Esophagus squamous epithelium (tissue), 5 donors: ENCODE measurements at regions of chr3 and their contacts with region 1.

Region 1: DNA sequence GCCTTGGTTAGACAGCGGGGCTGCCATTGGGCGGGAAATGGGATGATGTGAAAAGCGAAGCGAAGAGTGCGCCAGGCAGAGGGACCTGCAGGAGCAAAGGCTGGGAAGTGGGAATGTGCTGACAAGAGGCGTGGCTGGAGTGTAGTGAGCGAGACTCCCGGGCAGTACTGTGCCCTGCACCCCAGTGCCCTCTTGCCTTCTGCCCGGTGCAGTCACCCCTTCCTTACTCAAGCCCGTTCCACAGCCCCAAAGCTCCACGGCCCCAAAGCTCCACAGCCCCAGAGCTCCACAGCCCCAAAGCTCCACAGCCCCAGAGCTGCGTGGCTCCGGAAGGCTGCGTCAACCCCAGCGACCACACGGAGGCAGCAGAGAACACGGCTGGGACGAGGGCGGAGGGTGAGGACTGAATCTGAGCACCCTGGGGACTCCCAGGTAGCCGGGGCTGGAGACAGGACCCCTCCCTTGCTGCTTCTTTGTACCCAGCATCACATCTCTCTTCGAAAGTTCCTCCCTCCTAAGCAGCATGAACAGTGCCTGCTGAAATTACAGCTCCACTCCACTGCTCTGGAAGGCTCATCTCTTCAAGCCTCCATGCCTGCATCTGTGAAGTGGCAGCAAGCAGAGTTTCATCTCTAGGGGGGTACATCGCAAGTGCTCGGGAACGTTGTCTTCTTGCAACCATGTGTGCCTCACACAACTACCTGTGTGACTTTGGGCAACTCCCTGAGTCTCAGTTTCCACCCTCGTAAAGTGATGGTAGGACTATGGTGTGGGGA is 108.9 kb downstream of the FBLN2 start:
- DNase-seq: no peak
- H3K4me3 ChIP-seq: no peak overlapping the region
- H3K27ac ChIP-seq: no peak overlapping the region
- H3K4me1 ChIP-seq: peaks cover 0 to 12% (median 0%) of the 10 kb centered on the region in 3 donors
- H3K27me3 ChIP-seq: peaks cover 0 to 96% (median 0%) of the 10 kb centered on the region in 4 donors
- CTCF ChIP-seq: peak; percentile 61 to 91 (median 82)
- POLR2A ChIP-seq: no peak

Region 2: DNA sequence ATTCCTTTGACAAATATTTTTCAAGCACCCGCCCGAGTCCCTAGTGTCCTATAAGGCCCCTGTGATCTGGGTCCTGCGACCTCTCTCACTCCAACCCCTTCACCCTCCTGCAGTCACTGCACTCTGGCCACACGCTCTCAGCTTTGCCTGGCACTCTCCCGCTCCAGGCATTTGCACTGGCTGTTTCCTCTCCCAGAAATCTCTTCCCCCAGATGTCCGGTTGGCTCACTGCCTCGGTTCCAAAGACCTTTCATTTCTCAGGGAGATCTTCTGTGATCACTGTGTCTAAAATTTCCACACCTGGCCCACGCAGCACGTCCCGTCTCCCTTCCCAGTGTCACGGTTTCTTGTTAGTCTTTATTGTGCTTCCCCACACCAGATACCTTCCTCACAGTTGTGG is 124.7 kb after region 1 on chr3:
- intact Hi-C with region 1: no loop called
- DNase-seq: no peak
- H3K4me3 ChIP-seq: peak overlapping the region in 1 of 4 donors; percentile 6
- H3K27ac ChIP-seq: no peak overlapping the region
- H3K4me1 ChIP-seq: no peaks in the 10 kb centered on the region
- H3K27me3 ChIP-seq: peaks cover 0 to 62% (median 0%) of the 10 kb centered on the region in 4 donors
- CTCF ChIP-seq: no peak
- POLR2A ChIP-seq: no peak

Region 3: DNA sequence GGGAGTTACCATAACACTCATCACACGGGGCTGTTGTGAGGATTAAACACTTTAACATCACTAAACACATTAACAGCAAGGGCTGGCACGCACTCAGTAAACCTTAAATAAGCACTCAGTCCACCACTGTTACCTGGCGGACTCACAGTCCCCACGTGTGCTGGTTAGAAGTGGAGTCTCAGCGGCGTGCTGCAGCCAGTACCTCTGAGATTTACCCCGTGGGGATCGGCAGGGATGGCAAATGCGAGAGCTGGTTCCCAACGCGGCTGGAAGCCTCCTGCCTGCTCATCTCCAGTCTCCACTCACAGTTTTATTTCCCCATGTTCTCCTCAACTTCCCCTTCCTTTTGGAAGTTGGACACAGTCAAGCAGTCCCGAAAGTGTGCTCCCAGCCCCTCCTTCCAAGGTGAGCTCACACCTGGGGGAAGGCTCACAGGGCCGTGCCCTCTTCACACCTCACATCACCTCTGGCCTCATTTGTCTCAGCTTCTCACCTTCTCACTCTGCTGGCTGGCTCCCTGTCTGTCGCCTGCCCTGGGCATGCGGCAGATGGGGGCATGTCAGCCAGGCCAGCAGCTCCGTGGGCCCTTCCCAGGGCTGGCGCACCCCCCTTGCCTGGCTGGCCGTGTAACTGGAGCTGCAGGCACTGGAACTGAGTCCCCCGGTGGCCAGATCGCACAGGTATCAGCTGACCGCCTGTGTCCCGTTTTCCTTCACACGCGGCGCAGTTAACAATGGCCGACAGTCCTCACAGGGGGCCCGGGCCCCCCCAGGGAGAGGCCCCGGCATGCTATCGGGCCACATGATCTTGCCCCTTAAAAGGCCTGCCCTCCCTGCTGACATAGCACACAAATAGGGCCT is 134.9 kb after region 1 on chr3:
- intact Hi-C with region 1: no loop called
- DNase-seq: no peak
- H3K4me3 ChIP-seq: no peak overlapping the region
- H3K27ac ChIP-seq: no peak overlapping the region
- H3K4me1 ChIP-seq: no peaks in the 10 kb centered on the region
- H3K27me3 ChIP-seq: peaks cover 0 to 95% (median 0%) of the 10 kb centered on the region in 4 donors
- CTCF ChIP-seq: no peak
- POLR2A ChIP-seq: no peak

Region 4: GRCh38 chr3:13884851-13885703 is 227.2 kb after region 1 on chr3:
- intact Hi-C with region 1: loop called (anchors 2 kb)
- DNase-seq: no peak
- H3K4me3 ChIP-seq: no peak overlapping the region
- H3K27ac ChIP-seq: no peak overlapping the region
- H3K4me1 ChIP-seq: peaks cover 6 to 10% (median 8%) of the 10 kb centered on the region in 3 donors
- H3K27me3 ChIP-seq: peaks cover 0 to 70% (median 0%) of the 10 kb centered on the region in 4 donors
- CTCF ChIP-seq: peak in 5 of 6 experiments; percentile 70 to 89 (median 76)
- POLR2A ChIP-seq: no peak